ENCODE measurements at regions of chr13 and their contacts with region 1.

Region 1: DNA sequence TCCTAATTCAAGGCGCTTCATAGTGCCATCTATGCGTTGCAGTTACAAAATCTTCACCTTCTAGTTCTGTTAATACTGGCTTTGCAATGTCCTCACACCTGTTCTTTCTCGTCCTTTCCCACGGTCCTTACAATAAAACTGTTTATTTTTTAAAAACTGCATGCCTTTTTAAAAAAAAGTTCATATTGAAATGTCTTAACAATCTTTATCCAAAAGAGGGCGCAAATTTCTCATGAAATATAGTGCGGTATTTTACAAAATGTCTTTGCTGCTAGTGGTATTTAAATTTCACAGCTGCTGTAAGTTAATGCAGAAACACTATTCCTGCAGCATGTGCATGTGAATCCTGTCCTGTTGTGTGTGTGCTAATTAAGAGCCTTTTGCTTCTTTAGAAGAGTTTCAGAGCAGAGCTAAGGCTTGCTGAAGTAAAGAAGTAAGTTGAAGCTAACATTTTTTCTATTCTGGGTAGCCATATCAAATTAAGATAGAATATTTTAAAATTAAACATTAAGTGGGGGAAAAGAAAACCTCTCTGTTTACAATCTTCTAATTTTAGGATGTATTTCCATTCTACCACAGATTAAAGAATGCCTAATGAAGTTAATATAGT is 15.8 kb upstream of the CLDN10 start:
- DNase-seq: no peak
- H3K4me3 Mint-ChIP-seq: no peak overlapping the region
- H3K27ac Mint-ChIP-seq: no peak overlapping the region
- H3K4me1 Mint-ChIP-seq: peaks cover 7% of the 10 kb centered on the region
- H3K27me3 Mint-ChIP-seq: peaks cover 18% of the 10 kb centered on the region

Region 2: DNA sequence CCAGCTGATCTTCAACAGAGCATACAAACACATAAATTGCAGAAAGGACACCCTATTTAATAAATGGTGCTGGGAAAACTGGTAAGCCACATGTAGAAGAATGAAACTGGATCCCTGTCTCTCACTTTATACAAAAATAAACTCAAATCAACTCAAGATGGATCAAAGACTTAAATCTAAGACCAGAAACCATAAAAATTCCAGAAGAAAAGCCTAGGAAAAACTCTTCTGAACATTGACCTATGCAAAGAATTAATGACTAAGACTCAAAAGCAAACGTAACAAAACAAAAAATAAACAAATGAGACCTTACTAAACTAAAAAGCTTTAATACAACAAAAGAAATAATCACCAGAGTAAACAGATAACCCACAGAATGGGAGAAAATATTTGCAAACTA is 161.0 kb before region 1 on chr13:
- CTCF ChIA-PET with region 1: no interaction called
- POLR2A ChIA-PET with region 1: no interaction called
- intact Hi-C with region 1: no loop called
- DNase-seq: no peak
- H3K4me3 Mint-ChIP-seq: no peak overlapping the region
- H3K27ac Mint-ChIP-seq: no peak overlapping the region
- H3K4me1 Mint-ChIP-seq: peaks cover 5% of the 10 kb centered on the region
- H3K27me3 Mint-ChIP-seq: peaks cover 3% of the 10 kb centered on the region

Region 3: GRCh38 chr13:95601906-95602305 is 65.2 kb after region 1 on chr13:
- CTCF ChIA-PET with region 1: no interaction called
- POLR2A ChIA-PET with region 1: no interaction called
- intact Hi-C with region 1: no loop called
- DNase-seq: no peak
- H3K4me3 Mint-ChIP-seq: no peak overlapping the region
- H3K27ac Mint-ChIP-seq: no peak overlapping the region
- H3K4me1 Mint-ChIP-seq: no peaks in the 10 kb centered on the region
- H3K27me3 Mint-ChIP-seq: peaks cover 21% of the 10 kb centered on the region

Region 4: GRCh38 chr13:95624020-95624419 is 87.3 kb after region 1 on chr13:
- CTCF ChIA-PET with region 1: interaction called, 5 read pairs
- POLR2A ChIA-PET with region 1: no interaction called
- intact Hi-C with region 1: loop called (anchors 5 kb)
- DNase-seq: peak; percentile 12
- H3K4me3 Mint-ChIP-seq: no peak overlapping the region
- H3K27ac Mint-ChIP-seq: no peak overlapping the region
- H3K4me1 Mint-ChIP-seq: no peaks in the 10 kb centered on the region
- H3K27me3 Mint-ChIP-seq: peaks cover 6% of the 10 kb centered on the region

Region 5: DNA sequence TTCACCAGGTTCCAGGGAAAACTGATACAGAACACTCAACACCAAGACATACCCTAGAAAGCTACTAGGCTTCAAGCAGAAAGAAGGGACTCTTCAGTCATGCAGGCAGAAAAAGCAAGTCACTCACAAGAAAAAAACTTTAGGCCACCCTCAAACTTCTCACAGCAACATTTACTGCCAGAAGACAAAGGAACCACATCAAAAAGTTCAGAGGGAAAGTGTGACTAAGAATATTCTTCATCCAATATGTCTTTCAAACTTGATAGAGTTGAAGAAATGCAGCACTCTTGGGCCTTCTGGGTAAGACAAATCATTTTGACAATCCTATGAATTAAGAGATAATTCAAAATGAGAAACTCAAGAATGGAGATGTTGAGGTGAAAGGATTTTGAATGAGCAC is 100.1 kb after region 1 on chr13:
- CTCF ChIA-PET with region 1: no interaction called
- POLR2A ChIA-PET with region 1: no interaction called
- intact Hi-C with region 1: loop called (anchors 5 kb)
- DNase-seq: no peak
- H3K4me3 Mint-ChIP-seq: no peak overlapping the region
- H3K27ac Mint-ChIP-seq: peak overlapping the region; percentile 56
- H3K4me1 Mint-ChIP-seq: peaks cover 10% of the 10 kb centered on the region
- H3K27me3 Mint-ChIP-seq: peaks cover 30% of the 10 kb centered on the region

Region 6: GRCh38 chr13:95660981-95661581 is 124.3 kb after region 1 on chr13:
- CTCF ChIA-PET with region 1: interaction called, 5 read pairs
- POLR2A ChIA-PET with region 1: no interaction called
- intact Hi-C with region 1: loop called (anchors 5 kb)
- DNase-seq: no peak
- H3K4me3 Mint-ChIP-seq: no peak overlapping the region
- H3K27ac Mint-ChIP-seq: no peak overlapping the region
- H3K4me1 Mint-ChIP-seq: no peaks in the 10 kb centered on the region
- H3K27me3 Mint-ChIP-seq: peaks cover 16% of the 10 kb centered on the region

Measured in activated CD4-positive, alpha-beta memory T cell treated with anti-CD3 and anti-CD28 coated beads for 36 hours (primary cell).